Naive thymus-derived CD4-positive, alpha-beta T cell (primary cell): ENCODE measurements at regions of chr17 and their contacts with region 1.

Region 1: GRCh38 chr17:32341857-32342602 is at the start of gene C17orf75:
- DNase-seq: peak; percentile 63 to 81 (median 76)
- ATAC-seq: peak; percentile 92
- H3K4me3 ChIP-seq: peak within 1 kb of the TSS; percentile 64
- H3K4me3 Mint-ChIP-seq: peak within 1 kb of the TSS; percentile 83 to 94 (median 92)
- H3K27ac ChIP-seq: peak within 1 kb of the TSS; percentile 80
- H3K27ac Mint-ChIP-seq: peak within 1 kb of the TSS; percentile 83 to 96 (median 93)
- H3K4me1 ChIP-seq: peaks cover 5 to 9% of the 10 kb centered on the region in 2 donors
- H3K4me1 Mint-ChIP-seq: peaks cover 19 to 33% (median 25%) of the 10 kb centered on the region in 7 donors
- H3K27me3 ChIP-seq: no peaks in the 10 kb centered on the region
- H3K27me3 Mint-ChIP-seq: no peaks in the 10 kb centered on the region
- total RNA-seq, gene C17orf75: 14.2 to 22.0 (median 17.9) TPM

Region 2: GRCh38 chr17:32331243-32332040 is 10.6 kb before region 1 on chr17:
- CTCF ChIA-PET with region 1: no interaction called
- POLR2A ChIA-PET with region 1: interaction called, 4 read pairs
- intact Hi-C with region 1: loop called in 1 of 2 experiments (anchors 1 kb)
- DNase-seq: no peak
- ATAC-seq: no peak
- H3K4me3 ChIP-seq: no peak overlapping the region
- H3K4me3 Mint-ChIP-seq: peak overlapping the region in 4 of 10 donors; percentile 10 to 74 (median 46)
- H3K27ac ChIP-seq: peak overlapping the region; percentile 49
- H3K27ac Mint-ChIP-seq: peak overlapping the region; percentile 7 to 85 (median 51)
- H3K4me1 ChIP-seq: peaks cover 12 to 14% of the 10 kb centered on the region in 2 donors
- H3K4me1 Mint-ChIP-seq: peaks cover 12 to 51% (median 19%) of the 10 kb centered on the region in 7 donors
- H3K27me3 ChIP-seq: no peaks in the 10 kb centered on the region
- H3K27me3 Mint-ChIP-seq: no peaks in the 10 kb centered on the region

Region 3: DNA sequence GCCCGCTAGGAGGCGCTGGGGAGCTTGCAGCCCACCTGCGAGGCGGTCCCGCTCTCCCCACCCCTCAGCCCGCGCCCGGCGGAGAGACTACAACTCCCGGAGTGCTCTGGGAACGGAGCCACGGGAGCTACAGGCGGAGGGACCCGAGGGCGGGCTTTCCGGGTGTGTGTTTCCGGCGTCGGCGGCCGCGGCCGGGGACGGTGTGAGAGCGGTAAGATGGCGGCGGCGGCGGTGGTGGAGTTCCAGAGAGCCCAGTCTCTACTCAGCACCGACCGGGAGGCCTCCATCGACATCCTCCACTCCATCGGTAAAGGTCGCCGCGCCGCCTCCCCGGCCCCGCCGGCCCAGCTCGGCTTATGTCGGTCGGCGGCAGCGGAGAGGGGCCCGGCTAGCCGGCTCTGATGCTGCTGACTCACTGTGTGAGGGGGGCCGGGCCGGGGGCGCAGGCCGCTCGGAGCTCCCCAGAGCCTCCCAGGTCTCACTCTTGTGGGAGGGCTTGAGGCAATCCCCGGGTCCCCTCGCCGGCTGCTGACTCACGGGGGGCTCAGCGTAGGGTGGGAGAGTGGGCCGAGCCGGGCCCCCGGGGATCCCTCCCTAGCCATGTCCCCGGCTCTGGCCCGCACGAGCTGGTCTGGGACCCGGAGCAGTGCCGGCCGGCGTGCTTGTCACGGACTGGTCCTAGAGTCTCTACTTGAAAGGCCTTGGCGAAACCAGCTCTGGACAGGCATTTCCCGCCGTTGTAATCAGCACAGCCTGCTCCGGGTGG is 102.5 kb after region 1 on chr17 and contains the start of gene PSMD11:
- CTCF ChIA-PET with region 1: no interaction called
- POLR2A ChIA-PET with region 1: interaction called, 5 read pairs
- intact Hi-C with region 1: loop called in 1 of 2 experiments (anchors 1 kb)
- DNase-seq: peak; percentile 98 to 100 (median 99)
- ATAC-seq: peak; percentile 99
- H3K4me3 ChIP-seq: peak within 1 kb of the TSS; percentile 80
- H3K4me3 Mint-ChIP-seq: peak within 1 kb of the TSS; percentile 78 to 93 (median 86)
- H3K27ac ChIP-seq: peak within 1 kb of the TSS; percentile 94
- H3K27ac Mint-ChIP-seq: peak within 1 kb of the TSS; percentile 52 to 83 (median 78)
- H3K4me1 ChIP-seq: peaks cover 13 to 14% of the 10 kb centered on the region in 2 donors
- H3K4me1 Mint-ChIP-seq: peaks cover 25 to 46% (median 36%) of the 10 kb centered on the region in 7 donors
- H3K27me3 ChIP-seq: no peaks in the 10 kb centered on the region
- H3K27me3 Mint-ChIP-seq: peaks cover 0 to 23% (median 0%) of the 10 kb centered on the region in 5 donors
- total RNA-seq, gene PSMD11: 60.1 to 112 (median 67.5) TPM